Posterior cingulate gyrus (tissue), 11 donors: ENCODE measurements at regions of chr3 and their contacts with region 1.

Region 1: DNA sequence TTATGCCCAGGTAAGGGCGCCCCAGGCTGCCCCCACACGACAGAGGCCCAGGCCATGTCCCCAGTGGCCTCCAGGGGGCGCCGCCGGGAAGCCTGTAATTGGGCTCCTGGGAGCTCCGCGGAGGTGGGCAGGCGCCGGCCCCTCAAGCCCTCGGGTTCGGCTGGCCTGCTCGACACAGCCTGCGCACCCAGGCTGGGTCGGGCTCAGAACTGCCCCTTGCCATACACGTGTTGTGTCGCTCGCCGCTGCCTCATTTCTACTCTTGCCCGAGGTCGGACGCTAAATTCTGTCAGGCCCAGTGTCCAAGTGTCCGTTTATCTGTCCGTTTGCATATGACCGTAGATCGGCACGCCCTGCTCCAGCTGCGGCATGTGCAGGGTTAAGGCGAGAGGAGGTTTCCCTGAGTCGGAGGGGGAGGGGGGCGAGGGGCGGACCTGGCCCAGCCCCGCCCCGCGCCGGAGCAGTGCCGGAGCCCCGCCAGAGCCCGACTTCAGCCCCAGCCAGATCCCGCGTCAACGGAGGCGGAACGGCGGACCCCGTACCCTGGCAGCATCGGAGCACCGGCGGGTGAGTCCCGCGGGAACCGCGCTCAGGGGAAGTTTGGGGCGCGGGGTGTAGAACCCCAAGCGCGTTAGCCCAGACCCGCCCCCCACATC is at the start of gene KLHDC8B:
- DNase-seq: peak; percentile 59 to 97 (median 83)

Region 2: DNA sequence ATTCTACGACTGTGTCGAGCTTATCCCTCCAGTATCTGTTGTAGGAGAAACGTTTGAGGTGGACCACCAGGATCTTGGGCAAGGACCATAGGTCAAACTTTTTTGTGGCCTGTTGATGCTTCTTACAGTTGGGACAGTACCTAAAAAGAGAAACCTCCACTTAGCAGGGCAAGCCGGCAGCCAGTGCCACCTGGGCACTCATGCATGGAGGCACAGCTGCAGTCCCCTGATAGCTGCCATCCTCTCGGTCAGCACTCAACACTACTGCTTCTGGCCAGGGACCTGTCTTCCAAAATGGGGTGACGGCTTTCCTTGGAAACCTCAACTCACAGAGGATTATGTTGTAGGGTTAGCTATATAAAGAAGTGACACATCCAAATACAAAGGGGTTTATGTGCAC is 112.8 kb after region 1 on chr3:
- intact Hi-C with region 1: loop called (anchors 5 kb)
- DNase-seq: peak in 1 of 10 donors; percentile 57

Region 3: DNA sequence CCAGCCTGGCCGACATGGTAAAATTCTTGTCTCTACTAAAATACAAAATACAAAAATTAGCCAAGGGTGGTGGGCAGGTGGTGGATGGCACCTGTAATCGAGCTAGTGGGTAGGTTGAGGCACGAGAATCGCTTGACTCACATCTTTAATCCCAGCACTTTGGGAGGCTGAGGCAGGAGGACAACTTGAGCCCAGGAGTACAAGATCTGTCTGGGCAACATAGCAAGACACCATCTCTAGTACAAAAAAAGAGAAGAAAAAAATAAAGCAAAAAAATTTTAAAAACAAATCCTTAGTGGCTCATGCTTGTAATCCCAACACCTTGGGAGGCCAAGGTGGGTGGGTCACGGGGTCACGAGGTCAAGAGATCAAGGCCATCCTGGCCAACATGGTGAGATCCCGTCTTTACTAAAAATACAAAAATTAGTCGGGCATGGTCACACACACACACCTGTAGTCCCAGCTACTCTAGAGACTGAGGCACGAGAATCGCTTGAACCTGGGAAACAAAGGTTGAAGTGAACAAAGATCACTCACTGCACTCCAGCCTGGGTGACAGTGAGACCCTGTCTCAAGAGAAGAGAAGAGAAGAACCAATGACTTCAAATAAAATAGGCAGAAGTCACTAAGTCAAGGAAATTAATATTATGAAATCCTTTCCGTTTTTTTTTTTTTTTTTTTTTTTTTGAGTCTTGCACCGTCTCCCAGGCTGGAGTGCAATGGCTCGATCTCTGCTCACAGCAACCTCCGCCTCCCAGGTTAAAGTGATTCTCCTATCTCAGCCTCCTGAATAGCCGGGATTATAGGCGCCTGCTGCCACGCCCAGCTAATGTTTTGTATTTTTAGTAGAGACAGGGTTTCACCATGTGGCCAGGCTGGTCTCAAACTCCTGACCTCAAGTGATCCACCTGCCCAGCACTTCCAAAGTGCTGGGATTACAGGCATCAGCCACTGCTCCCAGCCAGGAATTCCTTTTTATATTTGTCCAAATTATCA is 235.6 kb after region 1 on chr3:
- intact Hi-C with region 1: loop called (anchors 5 kb)
- DNase-seq: peak in 2 of 10 donors; percentile 6 to 57